ENCODE measurements at regions of chr11 and their contacts with region 1.

Region 1: GRCh38 chr11:66222358-66223149 is 45.9 kb upstream of the RAB1B start:
- DNase-seq: peak; percentile 88
- H3K4me3 ChIP-seq: no peak overlapping the region
- H3K27ac ChIP-seq: no peak overlapping the region
- H3K4me1 ChIP-seq: no peaks in the 10 kb centered on the region
- H3K27me3 ChIP-seq: no peaks in the 10 kb centered on the region
- CTCF ChIP-seq: peak; percentile 100

Region 2: GRCh38 chr11:66251809-66252208 is 29.3 kb after region 1 on chr11:
- CTCF ChIA-PET with region 1: no interaction called
- dilution Hi-C with region 1: loop called (anchors 5 kb)
- in situ Hi-C with region 1: no loop called
- intact Hi-C with region 1: no loop called
- DNase-seq: no peak
- H3K4me3 ChIP-seq: no peak overlapping the region
- H3K27ac ChIP-seq: no peak overlapping the region
- H3K4me1 ChIP-seq: peaks cover 3% of the 10 kb centered on the region
- H3K27me3 ChIP-seq: no peaks in the 10 kb centered on the region
- CTCF ChIP-seq: no peak

Region 3: DNA sequence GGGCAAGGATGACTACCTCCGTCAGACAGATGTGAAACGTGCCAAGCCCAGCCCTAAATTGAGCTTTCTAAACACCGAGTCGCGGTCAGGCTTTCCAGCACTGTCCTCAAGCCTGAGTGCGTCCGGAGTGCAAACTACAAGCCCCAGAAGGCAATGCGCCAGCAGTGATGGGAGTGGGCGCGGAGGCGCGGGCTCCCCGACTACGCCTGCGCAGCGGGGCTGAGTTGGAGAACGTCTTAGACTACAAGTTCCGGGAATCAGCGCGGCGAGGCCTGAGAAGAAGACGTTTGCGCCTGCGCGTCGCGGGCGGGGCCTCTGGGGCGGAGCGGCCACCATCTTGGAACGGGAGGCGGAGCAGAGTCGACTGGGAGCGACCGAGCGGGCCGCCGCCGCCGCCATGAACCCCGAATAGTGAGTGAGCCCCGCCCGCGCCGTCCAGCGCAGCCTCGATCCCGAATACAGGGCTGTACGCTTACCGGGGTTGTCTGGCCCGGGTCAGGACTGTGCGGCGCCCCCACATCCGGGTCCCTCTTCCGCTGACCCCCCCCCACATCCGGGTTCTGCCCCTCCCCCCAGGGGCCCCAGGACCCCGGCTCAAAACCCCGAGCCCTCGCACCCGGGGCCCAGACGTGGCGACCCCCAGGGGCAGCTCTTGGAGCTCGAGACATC is 45.9 kb after region 1 on chr11 and contains the start of gene RAB1B:
- CTCF ChIA-PET with region 1: no interaction called
- dilution Hi-C with region 1: no loop called
- in situ Hi-C with region 1: no loop called
- intact Hi-C with region 1: loop called (anchors 1 kb)
- DNase-seq: peak; percentile 99
- H3K4me3 ChIP-seq: peak within 1 kb of the TSS; percentile 73 to 91 (median 81)
- H3K27ac ChIP-seq: peak within 1 kb of the TSS; percentile 54
- H3K4me1 ChIP-seq: peaks cover 21% of the 10 kb centered on the region
- H3K27me3 ChIP-seq: no peaks in the 10 kb centered on the region
- CTCF ChIP-seq: no peak
- total RNA-seq, gene RAB1B: 79.5 to 169 TPM

Region 4: GRCh38 chr11:66328307-66329144 is 106.0 kb after region 1 on chr11:
- CTCF ChIA-PET with region 1: no interaction called
- dilution Hi-C with region 1: no loop called
- in situ Hi-C with region 1: no loop called
- intact Hi-C with region 1: loop called (anchors 1 kb)
- DNase-seq: peak; percentile 45
- H3K4me3 ChIP-seq: no peak overlapping the region
- H3K27ac ChIP-seq: no peak overlapping the region
- H3K4me1 ChIP-seq: peaks cover 26% of the 10 kb centered on the region
- H3K27me3 ChIP-seq: no peaks in the 10 kb centered on the region
- CTCF ChIP-seq: peak; percentile 89 to 96